Activated T-helper 1 cell treated with anti-CD3 and anti-CD28 coated beads, Interleukin-12 subunit alpha, Interleukin-12 subunit beta, Interleukin-2, Interleukin-4 antibody, amounts not matched to agents 30 ng/mL and 10 ng/mL and 1 ng/mL, durations not matched to agents 14 hours and 24 hours and 36 hours (primary cell): ENCODE measurements at regions of chr2 and their contacts with region 1.

Region 1: DNA sequence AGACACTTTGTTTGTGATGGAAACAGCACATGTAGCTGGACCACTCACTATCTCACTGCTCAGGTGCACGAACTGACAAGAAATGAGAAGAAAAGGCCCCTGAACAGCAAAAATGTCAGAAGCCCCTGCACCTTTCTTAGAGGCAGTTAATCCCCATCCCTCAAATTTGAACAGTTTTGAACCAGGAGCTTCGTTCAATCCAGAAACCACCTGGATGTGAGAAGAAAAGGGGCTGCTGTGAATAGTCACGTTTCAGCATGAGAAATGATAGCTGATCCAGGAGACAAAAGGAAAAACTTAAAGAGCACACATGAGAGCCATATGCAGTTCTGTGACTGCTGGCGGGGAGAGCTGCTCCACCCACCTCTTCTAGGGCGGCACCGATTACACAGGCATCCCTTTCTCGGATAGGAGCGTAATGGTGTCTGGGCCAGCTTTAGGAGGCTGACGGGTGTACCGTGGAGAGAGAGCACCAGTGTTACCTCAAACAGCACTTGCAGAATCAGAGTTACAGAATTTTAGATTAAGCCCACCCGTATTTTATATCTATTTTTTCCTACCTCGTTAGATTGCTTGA is 117.0 kb upstream of the EML6 start:
- DNase-seq: no peak
- H3K4me3 Mint-ChIP-seq: peak overlapping the region; percentile 61
- H3K27ac Mint-ChIP-seq: peak overlapping the region; percentile 85
- H3K4me1 Mint-ChIP-seq: peaks cover 83% of the 10 kb centered on the region
- H3K27me3 Mint-ChIP-seq: no peaks in the 10 kb centered on the region

Region 2: DNA sequence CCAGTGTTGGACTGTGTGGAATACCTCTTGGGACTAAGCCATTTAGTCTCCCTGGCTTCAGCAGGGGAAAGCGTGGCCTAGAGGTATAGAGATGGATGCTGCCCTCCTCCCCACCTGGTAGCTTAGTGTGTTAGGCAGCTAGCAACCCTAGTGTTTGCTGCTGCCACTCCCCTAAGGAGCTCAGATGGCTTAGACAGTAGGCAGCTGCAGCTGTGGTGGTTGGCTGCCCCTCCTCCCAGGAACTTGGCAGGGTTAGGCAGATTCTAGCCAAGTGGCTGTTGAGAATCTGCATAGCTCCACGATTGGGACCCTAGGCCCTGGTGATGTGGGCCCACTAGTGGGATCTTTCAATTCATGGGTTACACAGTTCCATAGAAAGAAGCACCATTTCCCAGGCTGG is 1389.2 kb before region 1 on chr2:
- intact Hi-C with region 1: no loop called
- DNase-seq: no peak
- H3K4me3 Mint-ChIP-seq: no peak overlapping the region
- H3K27ac Mint-ChIP-seq: no peak overlapping the region
- H3K4me1 Mint-ChIP-seq: no peaks in the 10 kb centered on the region
- H3K27me3 Mint-ChIP-seq: no peaks in the 10 kb centered on the region

Region 3: GRCh38 chr2:54589340-54590215 is 16.9 kb before region 1 on chr2:
- intact Hi-C with region 1: loop called (anchors 1 kb)
- DNase-seq: no peak
- H3K4me3 Mint-ChIP-seq: peak overlapping the region; percentile 70
- H3K27ac Mint-ChIP-seq: peak overlapping the region; percentile 88
- H3K4me1 Mint-ChIP-seq: peaks cover 79% of the 10 kb centered on the region
- H3K27me3 Mint-ChIP-seq: no peaks in the 10 kb centered on the region

Region 4: DNA sequence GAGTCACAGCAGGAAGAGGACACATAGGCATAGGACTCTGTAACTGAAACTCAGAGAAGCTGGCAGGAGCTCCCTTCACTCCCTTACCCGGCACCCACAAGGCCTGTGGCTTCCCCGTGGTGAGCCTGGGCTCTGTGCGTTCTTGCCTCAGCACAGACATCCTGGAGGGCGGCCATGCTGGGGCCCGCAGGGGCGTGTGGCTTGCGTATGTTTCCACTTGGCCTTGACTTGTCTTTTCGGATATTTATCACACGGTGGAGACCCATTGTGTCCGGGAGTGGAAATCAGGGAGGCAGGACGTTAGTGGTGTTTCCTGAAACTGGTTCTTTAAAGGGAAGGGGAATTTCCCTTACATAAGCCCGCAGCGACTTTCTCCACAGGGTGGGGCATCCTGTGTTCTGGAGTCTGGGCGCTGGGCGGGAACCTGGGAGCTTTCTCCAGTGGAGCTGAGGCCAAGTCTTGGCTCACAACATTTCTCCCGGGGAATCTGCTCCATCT is 67.1 kb after region 1 on chr2:
- intact Hi-C with region 1: loop called (anchors 5 kb)
- DNase-seq: peak; percentile 32
- H3K4me3 Mint-ChIP-seq: peak overlapping the region; percentile 43
- H3K27ac Mint-ChIP-seq: peak overlapping the region; percentile 73
- H3K4me1 Mint-ChIP-seq: peaks cover 48% of the 10 kb centered on the region
- H3K27me3 Mint-ChIP-seq: peaks cover 25% of the 10 kb centered on the region

Region 5: GRCh38 chr2:54838585-54839035 is 232.1 kb after region 1 on chr2:
- intact Hi-C with region 1: no loop called
- DNase-seq: peak; percentile 28
- H3K4me3 Mint-ChIP-seq: no peak overlapping the region
- H3K27ac Mint-ChIP-seq: no peak overlapping the region
- H3K4me1 Mint-ChIP-seq: no peaks in the 10 kb centered on the region
- H3K27me3 Mint-ChIP-seq: no peaks in the 10 kb centered on the region